ENCODE measurements at regions of chr7 and their contacts with region 1.

Region 1: GRCh38 chr7:3461923-3462322 is 160.9 kb downstream of the SDK1 start:
- DNase-seq: peak; percentile 90
- H3K4me3 Mint-ChIP-seq: peak overlapping the region; percentile 66
- H3K27ac Mint-ChIP-seq: peak overlapping the region; percentile 90
- H3K4me1 Mint-ChIP-seq: peaks cover 54% of the 10 kb centered on the region
- H3K27me3 Mint-ChIP-seq: no peaks in the 10 kb centered on the region

Region 2: GRCh38 chr7:2993868-2994267 is 468.1 kb before region 1 on chr7:
- CTCF ChIA-PET with region 1: no interaction called
- intact Hi-C with region 1: no loop called
- DNase-seq: no peak
- H3K4me3 Mint-ChIP-seq: no peak overlapping the region
- H3K27ac Mint-ChIP-seq: no peak overlapping the region
- H3K4me1 Mint-ChIP-seq: peaks cover 9% of the 10 kb centered on the region
- H3K27me3 Mint-ChIP-seq: no peaks in the 10 kb centered on the region

Region 3: DNA sequence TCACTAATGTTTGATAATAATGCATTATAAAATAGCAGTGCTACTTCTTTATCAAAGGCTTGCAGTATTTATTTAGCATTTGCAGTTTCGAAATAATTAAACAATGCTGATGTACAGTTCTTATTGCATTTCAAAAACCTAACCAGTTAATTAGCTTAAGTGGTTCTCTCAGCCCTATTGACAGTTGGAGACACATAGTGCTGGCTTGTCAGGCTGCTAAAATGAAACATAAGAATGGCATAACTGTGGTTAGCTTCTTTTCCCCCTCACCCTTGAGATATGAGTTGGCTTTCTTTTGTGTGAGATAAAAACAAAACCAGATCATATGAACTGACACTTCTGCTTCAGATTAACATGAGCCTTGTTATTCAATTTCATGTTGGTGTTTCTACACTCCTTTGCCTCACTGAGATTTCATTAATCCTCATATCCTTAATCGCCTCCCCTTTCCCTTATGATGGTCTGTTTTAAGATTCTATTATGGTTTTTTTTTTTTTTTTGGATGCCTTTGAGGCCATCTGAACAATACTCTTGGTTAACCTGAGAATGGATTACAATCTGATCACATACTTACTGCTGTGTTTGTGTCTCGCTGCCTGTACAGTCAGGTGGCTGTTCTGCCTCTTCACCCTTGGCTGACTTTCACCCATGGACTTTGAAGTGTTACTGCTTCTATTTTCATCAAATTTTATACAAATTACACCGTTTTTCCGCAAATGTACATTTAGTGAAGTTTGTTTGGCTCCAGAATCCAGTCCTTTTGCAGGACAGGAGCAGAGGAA is 52.9 kb before region 1 on chr7:
- CTCF ChIA-PET with region 1: no interaction called
- intact Hi-C with region 1: loop called (anchors 2 kb)
- DNase-seq: no peak
- H3K4me3 Mint-ChIP-seq: no peak overlapping the region
- H3K27ac Mint-ChIP-seq: peak overlapping the region; percentile 56
- H3K4me1 Mint-ChIP-seq: peaks cover 13% of the 10 kb centered on the region
- H3K27me3 Mint-ChIP-seq: peaks cover 2% of the 10 kb centered on the region

Region 4: GRCh38 chr7:3415861-3416312 is 46.0 kb before region 1 on chr7:
- CTCF ChIA-PET with region 1: no interaction called
- intact Hi-C with region 1: loop called (anchors 1 kb)
- DNase-seq: no peak
- H3K4me3 Mint-ChIP-seq: no peak overlapping the region
- H3K27ac Mint-ChIP-seq: no peak overlapping the region
- H3K4me1 Mint-ChIP-seq: peaks cover 2% of the 10 kb centered on the region
- H3K27me3 Mint-ChIP-seq: peaks cover 5% of the 10 kb centered on the region

Region 5: GRCh38 chr7:3493499-3493898 is 31.6 kb after region 1 on chr7:
- CTCF ChIA-PET with region 1: no interaction called
- intact Hi-C with region 1: loop called (anchors 1 kb)
- DNase-seq: no peak
- H3K4me3 Mint-ChIP-seq: no peak overlapping the region
- H3K27ac Mint-ChIP-seq: no peak overlapping the region
- H3K4me1 Mint-ChIP-seq: peaks cover 29% of the 10 kb centered on the region
- H3K27me3 Mint-ChIP-seq: no peaks in the 10 kb centered on the region